Activated B cell treated with CpG ODN at 0.5 μM for 24 hours (primary cell): ENCODE measurements at regions of chr2 and their contacts with region 1.

Region 1: GRCh38 chr2:38665854-38666555 is at the start of gene GALM:
- DNase-seq: peak; percentile 23
- ATAC-seq: peak; percentile 78
- H3K4me3 Mint-ChIP-seq: peak within 1 kb of the TSS; percentile 80
- H3K27ac Mint-ChIP-seq: peak within 1 kb of the TSS; percentile 59
- H3K4me1 Mint-ChIP-seq: peaks cover 26% of the 10 kb centered on the region
- H3K27me3 Mint-ChIP-seq: no peaks in the 10 kb centered on the region
- CTCF ChIP-seq: no peak
- total RNA-seq, gene GALM: 3.5 and 5.4 TPM in 2 replicates

Region 2: GRCh38 chr2:38720613-38721241 is 54.7 kb after region 1 on chr2:
- CTCF ChIA-PET with region 1: no interaction called
- POLR2A ChIA-PET with region 1: no interaction called
- intact Hi-C with region 1: loop called (anchors 5 kb)
- DNase-seq: no peak
- ATAC-seq: no peak
- H3K4me3 Mint-ChIP-seq: no peak overlapping the region
- H3K27ac Mint-ChIP-seq: no peak overlapping the region
- H3K4me1 Mint-ChIP-seq: peaks cover 32% of the 10 kb centered on the region
- H3K27me3 Mint-ChIP-seq: no peaks in the 10 kb centered on the region
- CTCF ChIP-seq: no peak